Calu3 (cell line): ENCODE measurements at regions of chr3 and their contacts with region 1.

Region 1: DNA sequence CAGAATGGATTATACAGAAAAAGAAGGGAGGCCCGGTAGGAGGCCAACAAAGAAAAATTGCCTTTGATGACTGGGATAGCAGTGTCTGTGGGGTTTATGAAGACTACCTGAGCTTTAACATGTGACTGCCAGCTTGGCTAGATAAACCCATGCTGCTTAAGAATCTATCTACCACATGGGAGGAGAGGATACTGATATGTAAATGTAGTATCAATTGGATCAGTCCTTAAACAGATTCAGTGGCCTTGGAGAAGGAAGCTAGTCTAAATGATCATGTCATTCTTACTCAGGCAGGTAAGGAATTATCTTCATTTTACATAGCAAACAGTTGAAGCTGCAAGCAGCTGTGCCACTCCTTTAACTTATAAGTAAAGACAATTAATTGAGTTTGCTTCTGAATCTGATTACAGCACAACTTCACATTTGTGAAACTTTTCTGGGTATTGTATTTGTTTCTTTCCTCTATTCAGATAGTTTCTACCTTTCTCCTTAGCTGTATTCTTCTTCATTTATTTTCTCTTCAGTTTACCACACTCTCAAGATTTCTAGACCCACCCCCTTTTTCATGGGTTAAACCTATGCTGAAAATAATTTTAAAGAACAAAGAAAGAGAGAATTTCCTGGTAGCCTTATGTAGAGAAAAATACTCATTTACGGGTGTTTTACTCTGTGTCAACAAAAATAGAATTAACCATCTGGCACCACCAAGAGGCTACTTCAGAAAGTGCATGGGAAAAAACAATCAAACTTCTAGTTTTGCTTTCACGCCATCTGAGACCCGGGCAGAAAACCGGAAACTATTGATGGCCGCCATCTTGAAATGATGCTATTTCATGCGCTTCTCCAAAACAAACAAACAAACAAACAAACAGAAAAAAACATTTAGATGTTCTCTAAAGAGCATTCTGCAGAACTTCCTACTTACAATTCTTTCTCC is 49.8 kb upstream of the SYNPR start:
- DNase-seq: peak; percentile 61
- H3K4me3 Mint-ChIP-seq: no peak overlapping the region
- H3K27ac Mint-ChIP-seq: peak overlapping the region; percentile 12
- H3K4me1 Mint-ChIP-seq: peaks cover 7% of the 10 kb centered on the region
- H3K27me3 Mint-ChIP-seq: peaks cover 28% of the 10 kb centered on the region
- CTCF ChIP-seq: peak; percentile 34

Region 2: GRCh38 chr3:62622553-62623193 is 605.7 kb before region 1 on chr3:
- CTCF ChIA-PET with region 1: no interaction called
- intact Hi-C with region 1: loop called (anchors 1 kb)
- DNase-seq: peak; percentile 28
- H3K4me3 Mint-ChIP-seq: no peak overlapping the region
- H3K27ac Mint-ChIP-seq: no peak overlapping the region
- H3K4me1 Mint-ChIP-seq: no peaks in the 10 kb centered on the region
- H3K27me3 Mint-ChIP-seq: no peaks in the 10 kb centered on the region
- CTCF ChIP-seq: peak; percentile 28

Region 3: DNA sequence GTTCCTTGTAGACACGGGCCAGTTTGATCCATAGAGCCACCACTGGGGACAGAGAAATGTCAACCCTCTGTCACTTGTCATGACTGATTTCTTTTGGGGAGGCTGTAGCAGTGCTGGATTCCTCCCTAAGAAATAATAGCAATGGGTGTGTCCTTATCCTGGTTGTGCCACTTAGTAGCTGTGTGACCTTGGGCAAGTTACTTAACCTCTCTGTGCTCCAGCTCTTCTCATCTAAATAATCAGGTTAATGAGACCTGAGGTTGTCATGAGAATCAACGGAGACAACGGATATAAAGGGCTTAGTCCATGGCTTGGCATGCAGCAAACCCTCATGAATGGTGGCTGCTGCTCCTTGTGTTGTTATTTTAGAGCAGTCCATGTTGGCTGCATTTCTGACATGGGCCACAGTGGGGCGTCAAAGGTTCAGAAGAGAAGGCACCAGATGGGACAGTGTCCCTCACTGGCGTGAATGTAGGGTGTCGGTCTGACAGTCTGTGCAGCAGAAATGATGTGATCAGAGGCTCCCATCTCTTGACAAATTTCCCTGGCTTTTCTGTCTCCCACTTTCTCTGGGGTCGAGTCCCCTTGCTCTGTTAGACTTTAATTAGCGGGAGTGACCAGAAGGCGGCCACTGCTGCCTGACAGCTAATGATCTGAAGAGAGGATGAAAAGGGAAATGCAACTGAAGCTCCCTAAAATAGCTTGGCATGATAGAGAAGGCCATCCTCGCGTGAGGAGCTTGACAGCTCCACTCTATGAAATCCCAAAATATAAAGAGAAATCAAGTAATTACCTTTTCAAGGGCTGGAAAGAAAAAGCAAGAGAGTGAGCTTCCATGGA is 562.5 kb before region 1 on chr3:
- CTCF ChIA-PET with region 1: interaction called, 10 read pairs
- intact Hi-C with region 1: loop called (anchors 1 kb)
- DNase-seq: peak; percentile 75
- H3K4me3 Mint-ChIP-seq: no peak overlapping the region
- H3K27ac Mint-ChIP-seq: no peak overlapping the region
- H3K4me1 Mint-ChIP-seq: no peaks in the 10 kb centered on the region
- H3K27me3 Mint-ChIP-seq: peaks cover 70% of the 10 kb centered on the region
- CTCF ChIP-seq: peak; percentile 59

Region 4: GRCh38 chr3:62833531-62833930 is 394.8 kb before region 1 on chr3:
- CTCF ChIA-PET with region 1: no interaction called
- intact Hi-C with region 1: loop called (anchors 1 kb)
- DNase-seq: no peak
- H3K4me3 Mint-ChIP-seq: no peak overlapping the region
- H3K27ac Mint-ChIP-seq: no peak overlapping the region
- H3K4me1 Mint-ChIP-seq: peaks cover 8% of the 10 kb centered on the region
- H3K27me3 Mint-ChIP-seq: peaks cover 13% of the 10 kb centered on the region
- CTCF ChIP-seq: peak; percentile 12

Region 5: GRCh38 chr3:62873761-62874647 is 354.4 kb before region 1 on chr3:
- CTCF ChIA-PET with region 1: interaction called, 3 read pairs
- intact Hi-C with region 1: loop called (anchors 10 kb)
- DNase-seq: peak; percentile 55
- H3K4me3 Mint-ChIP-seq: peak overlapping the region; percentile 88
- H3K27ac Mint-ChIP-seq: no peak overlapping the region
- H3K4me1 Mint-ChIP-seq: peaks cover 8% of the 10 kb centered on the region
- H3K27me3 Mint-ChIP-seq: peaks cover 62% of the 10 kb centered on the region
- CTCF ChIP-seq: no peak

Region 6: GRCh38 chr3:63068012-63068645 is 160.2 kb before region 1 on chr3:
- CTCF ChIA-PET with region 1: no interaction called
- intact Hi-C with region 1: no loop called
- DNase-seq: peak; percentile 52
- H3K4me3 Mint-ChIP-seq: no peak overlapping the region
- H3K27ac Mint-ChIP-seq: no peak overlapping the region
- H3K4me1 Mint-ChIP-seq: peaks cover 23% of the 10 kb centered on the region
- H3K27me3 Mint-ChIP-seq: no peaks in the 10 kb centered on the region
- CTCF ChIP-seq: no peak

Region 7: DNA sequence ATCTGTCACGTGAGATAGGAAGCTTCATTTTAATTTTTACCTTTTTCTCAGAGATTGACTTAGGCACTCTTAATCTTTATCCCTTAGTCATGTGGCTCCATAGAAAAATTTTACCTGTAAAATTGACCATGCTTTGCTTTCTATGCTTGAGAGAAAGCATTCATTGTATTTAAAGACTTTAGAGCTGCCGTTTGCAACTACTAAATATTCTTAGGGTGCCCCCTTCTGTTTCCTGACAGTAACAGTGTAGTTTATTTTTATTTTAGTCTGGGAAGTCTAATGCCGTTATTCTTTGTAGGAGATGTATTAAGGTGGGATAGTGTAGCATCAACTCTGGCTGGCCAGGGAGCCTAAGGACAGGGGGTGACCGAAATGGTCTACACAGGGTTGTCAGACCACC is 34.7 kb before region 1 on chr3:
- CTCF ChIA-PET with region 1: no interaction called
- intact Hi-C with region 1: loop called (anchors 2 kb)
- DNase-seq: peak; percentile 14
- H3K4me3 Mint-ChIP-seq: no peak overlapping the region
- H3K27ac Mint-ChIP-seq: no peak overlapping the region
- H3K4me1 Mint-ChIP-seq: peaks cover 25% of the 10 kb centered on the region
- H3K27me3 Mint-ChIP-seq: no peaks in the 10 kb centered on the region
- CTCF ChIP-seq: peak; percentile 16

Region 8: DNA sequence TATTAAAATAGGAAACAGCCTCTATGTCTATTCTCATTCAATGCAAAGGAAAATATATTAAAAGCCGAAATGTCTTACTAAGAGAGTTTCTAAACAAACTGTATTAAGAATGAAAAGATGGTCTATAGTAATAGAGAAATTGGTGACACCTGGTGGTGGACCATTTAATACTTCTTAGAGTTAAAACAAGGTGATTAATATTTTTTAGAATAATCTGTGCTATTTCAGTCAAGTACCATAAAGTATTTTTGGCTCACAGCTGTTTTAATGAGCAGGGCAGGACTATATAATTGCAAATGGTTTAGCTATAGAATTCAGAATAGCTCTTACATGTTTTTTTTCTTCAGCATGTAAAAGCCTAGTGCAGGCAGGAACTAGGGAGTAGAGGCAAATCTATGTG is 105.5 kb after region 1 on chr3:
- CTCF ChIA-PET with region 1: no interaction called
- intact Hi-C with region 1: loop called (anchors 5 kb)
- DNase-seq: peak; percentile 8
- H3K4me3 Mint-ChIP-seq: no peak overlapping the region
- H3K27ac Mint-ChIP-seq: no peak overlapping the region
- H3K4me1 Mint-ChIP-seq: no peaks in the 10 kb centered on the region
- H3K27me3 Mint-ChIP-seq: no peaks in the 10 kb centered on the region
- CTCF ChIP-seq: no peak

Region 9: GRCh38 chr3:63740116-63740515 is 511.8 kb after region 1 on chr3:
- CTCF ChIA-PET with region 1: no interaction called
- intact Hi-C with region 1: no loop called
- DNase-seq: no peak
- H3K4me3 Mint-ChIP-seq: no peak overlapping the region
- H3K27ac Mint-ChIP-seq: no peak overlapping the region
- H3K4me1 Mint-ChIP-seq: no peaks in the 10 kb centered on the region
- H3K27me3 Mint-ChIP-seq: no peaks in the 10 kb centered on the region
- CTCF ChIP-seq: no peak